Activated naive CD4-positive, alpha-beta T cell treated with anti-CD3 and anti-CD28 coated beads, Interleukin-2, amount 10 ng/mL, durations not matched to agents 7 days and 5 days (primary cell): ENCODE measurements at regions of chr4 and their contacts with region 1.

Region 1: GRCh38 chr4:153643406-153644383 is 40.4 kb upstream of the TLR2 start:
- DNase-seq: no peak
- H3K4me3 Mint-ChIP-seq: no peak overlapping the region
- H3K27ac Mint-ChIP-seq: no peak overlapping the region
- H3K4me1 Mint-ChIP-seq: peaks cover 19% of the 10 kb centered on the region
- H3K27me3 Mint-ChIP-seq: no peaks in the 10 kb centered on the region

Region 2: GRCh38 chr4:153763404-153763803 is 119.7 kb after region 1 on chr4:
- CTCF ChIA-PET with region 1: interaction called, 11 read pairs
- DNase-seq: peak; percentile 32
- H3K4me3 Mint-ChIP-seq: no peak overlapping the region
- H3K27ac Mint-ChIP-seq: no peak overlapping the region
- H3K4me1 Mint-ChIP-seq: peaks cover 4% of the 10 kb centered on the region
- H3K27me3 Mint-ChIP-seq: peaks cover 35% of the 10 kb centered on the region